ENCODE measurements at regions of chr17 and their contacts with region 1.

Region 1: GRCh38 chr17:38421871-38422827 is 6.1 kb upstream of the ARHGAP23 start:
- DNase-seq: no peak
- H3K4me3 ChIP-seq: no peak overlapping the region
- H3K27ac ChIP-seq: no peak overlapping the region
- H3K4me1 ChIP-seq: no peaks in the 10 kb centered on the region
- H3K27me3 ChIP-seq: peaks cover 15% of the 10 kb centered on the region
- CTCF ChIP-seq: no peak

Region 2: DNA sequence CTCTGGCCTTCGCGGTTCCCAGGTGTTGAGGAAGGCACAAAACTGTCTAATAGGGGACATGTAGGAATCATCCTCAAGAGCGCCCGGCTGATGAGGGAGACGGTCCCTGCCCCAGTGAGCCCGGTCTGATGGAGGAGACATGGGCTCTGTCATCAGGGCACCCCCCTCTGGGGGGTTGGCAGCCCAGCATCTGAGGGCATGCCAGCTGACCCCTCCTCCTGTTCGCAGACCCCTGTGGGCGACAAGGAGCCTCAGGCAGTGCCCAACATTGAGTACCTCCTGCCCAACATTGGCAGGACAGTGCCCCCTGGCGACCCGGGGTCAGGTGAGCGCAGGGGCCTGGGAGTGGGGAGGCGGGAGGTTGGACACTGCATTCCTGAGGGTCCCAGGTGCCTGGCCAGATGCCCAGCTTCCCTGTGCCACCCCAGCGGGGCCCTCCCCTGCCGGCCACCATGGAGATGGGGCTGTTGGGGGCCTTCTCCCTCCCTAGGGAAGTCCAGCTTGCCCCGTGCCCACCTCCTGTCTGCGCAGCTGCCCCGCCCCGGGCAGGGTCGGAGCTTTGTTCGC is 76.1 kb after region 1 on chr17:
- CTCF ChIA-PET with region 1: no interaction called
- dilution Hi-C with region 1: no loop called
- in situ Hi-C with region 1: no loop called
- intact Hi-C with region 1: loop called (anchors 2 kb)
- DNase-seq: no peak
- H3K4me3 ChIP-seq: no peak overlapping the region
- H3K27ac ChIP-seq: no peak overlapping the region
- H3K4me1 ChIP-seq: no peaks in the 10 kb centered on the region
- H3K27me3 ChIP-seq: no peaks in the 10 kb centered on the region
- CTCF ChIP-seq: no peak